Transverse colon (tissue), 4 donors: ENCODE measurements at regions of chr12 and their contacts with region 1.

Region 1: GRCh38 chr12:76356094-76356493 is 7.9 kb upstream of the BBS10 start:
- DNase-seq: no peak
- H3K4me3 ChIP-seq: no peak overlapping the region
- H3K27ac ChIP-seq: no peak overlapping the region
- H3K4me1 ChIP-seq: no peaks in the 10 kb centered on the region
- H3K27me3 ChIP-seq: no peaks in the 10 kb centered on the region
- CTCF ChIP-seq: no peak
- EP300 ChIP-seq: no peak
- POLR2A ChIP-seq: no peak

Region 2: DNA sequence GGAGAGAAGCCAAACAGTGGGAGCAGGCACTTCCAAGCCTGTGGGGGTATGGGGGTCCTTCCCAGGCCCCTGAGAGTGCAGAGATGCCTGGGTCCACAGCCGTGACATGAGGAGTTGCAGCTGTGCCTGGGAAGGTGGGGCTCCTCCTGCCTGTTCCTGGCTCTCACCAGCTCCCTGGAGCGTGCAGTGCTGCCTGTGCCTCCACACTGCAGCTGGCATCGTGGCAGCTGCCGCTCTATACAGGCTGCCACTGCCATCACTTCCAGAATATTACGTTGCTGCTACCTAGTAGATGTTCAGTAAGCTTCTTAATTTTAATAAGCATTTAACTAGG is 1370.1 kb before region 1 on chr12:
- in situ Hi-C with region 1: no loop called
- intact Hi-C with region 1: no loop called
- DNase-seq: no peak
- H3K4me3 ChIP-seq: no peak overlapping the region
- H3K27ac ChIP-seq: no peak overlapping the region
- H3K4me1 ChIP-seq: peaks cover 0 to 13% (median 0%) of the 10 kb centered on the region in 4 donors
- H3K27me3 ChIP-seq: no peaks in the 10 kb centered on the region
- CTCF ChIP-seq: no peak
- EP300 ChIP-seq: no peak
- POLR2A ChIP-seq: no peak

Region 3: DNA sequence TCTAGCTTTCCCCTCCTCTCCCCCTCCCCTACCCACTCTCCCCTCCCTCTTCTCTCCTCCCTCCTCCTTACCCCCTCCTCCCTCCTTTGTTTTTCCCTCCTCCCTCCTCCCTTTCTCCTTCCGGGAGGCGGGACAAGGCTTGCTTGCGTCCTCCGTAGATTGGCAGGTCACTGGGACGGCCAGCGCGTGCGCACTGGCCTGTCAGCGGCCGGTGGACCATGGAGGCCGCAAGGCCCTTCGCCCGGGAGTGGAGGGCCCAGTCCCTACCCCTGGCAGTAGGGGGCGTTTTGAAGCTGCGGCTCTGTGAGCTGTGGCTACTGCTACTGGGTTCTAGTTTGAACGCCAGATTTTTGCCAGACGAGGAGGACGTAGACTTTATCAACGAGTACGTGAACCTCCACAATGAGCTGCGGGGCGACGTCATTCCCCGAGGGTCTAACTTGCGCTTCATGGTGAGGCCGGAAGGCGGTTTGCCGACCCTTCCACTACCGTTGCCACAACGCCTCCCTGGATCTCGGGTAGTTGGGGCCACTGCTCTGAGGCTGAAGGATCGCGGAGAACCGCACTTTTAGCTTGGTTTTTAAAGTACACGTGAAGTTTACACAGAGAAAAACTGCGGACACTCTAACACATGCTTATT is 965.1 kb before region 1 on chr12 and contains the start of gene GLIPR1L2:
- in situ Hi-C with region 1: no loop called
- intact Hi-C with region 1: loop called (anchors 10 kb)
- DNase-seq: peak; percentile 95
- H3K4me3 ChIP-seq: peak within 1 kb of the TSS; percentile 47 to 62 (median 51)
- H3K27ac ChIP-seq: peak within 1 kb of the TSS; percentile 84 to 91 (median 86)
- H3K4me1 ChIP-seq: peaks cover 0 to 22% (median 0%) of the 10 kb centered on the region in 4 donors
- H3K27me3 ChIP-seq: no peaks in the 10 kb centered on the region
- CTCF ChIP-seq: peak; percentile 67 to 82 (median 76)
- EP300 ChIP-seq: no peak
- POLR2A ChIP-seq: peak; percentile 52
- total RNA-seq, gene GLIPR1L2: 0.95 TPM in 1 of 4 donors, not detected in the others

Region 4: GRCh38 chr12:76274420-76275083 is 81.5 kb before region 1 on chr12:
- in situ Hi-C with region 1: no loop called
- intact Hi-C with region 1: no loop called
- DNase-seq: no peak
- H3K4me3 ChIP-seq: no peak overlapping the region
- H3K27ac ChIP-seq: no peak overlapping the region
- H3K4me1 ChIP-seq: no peaks in the 10 kb centered on the region
- H3K27me3 ChIP-seq: no peaks in the 10 kb centered on the region
- CTCF ChIP-seq: no peak
- EP300 ChIP-seq: no peak
- POLR2A ChIP-seq: no peak

Region 5: DNA sequence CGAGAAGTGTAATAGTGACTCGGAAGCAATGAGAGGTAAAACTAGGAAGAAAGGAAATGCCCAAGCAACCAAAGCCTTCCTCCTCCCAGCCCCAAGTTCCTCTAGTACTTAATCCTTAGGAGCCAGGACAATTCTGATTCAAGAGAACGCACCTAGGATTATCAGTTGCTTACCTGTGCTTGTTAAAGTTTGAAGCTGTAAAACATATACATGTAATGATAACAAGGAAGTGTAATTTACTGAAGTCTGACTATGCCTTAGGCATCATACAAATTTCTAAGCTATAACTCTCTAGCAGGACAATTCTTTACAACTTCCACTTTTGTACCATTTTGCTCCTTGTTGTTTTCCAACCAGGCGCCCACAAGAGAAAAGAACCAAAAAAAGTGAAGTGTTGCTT is 296.3 kb after region 1 on chr12:
- in situ Hi-C with region 1: no loop called
- intact Hi-C with region 1: no loop called
- DNase-seq: no peak
- H3K4me3 ChIP-seq: no peak overlapping the region
- H3K27ac ChIP-seq: no peak overlapping the region
- H3K4me1 ChIP-seq: peaks cover 0 to 18% (median 2%) of the 10 kb centered on the region in 4 donors
- H3K27me3 ChIP-seq: no peaks in the 10 kb centered on the region
- CTCF ChIP-seq: no peak
- EP300 ChIP-seq: no peak
- POLR2A ChIP-seq: no peak